Colonic mucosa (tissue), 4 donors: ENCODE measurements at regions of chr12 and their contacts with region 1.

Region 1: DNA sequence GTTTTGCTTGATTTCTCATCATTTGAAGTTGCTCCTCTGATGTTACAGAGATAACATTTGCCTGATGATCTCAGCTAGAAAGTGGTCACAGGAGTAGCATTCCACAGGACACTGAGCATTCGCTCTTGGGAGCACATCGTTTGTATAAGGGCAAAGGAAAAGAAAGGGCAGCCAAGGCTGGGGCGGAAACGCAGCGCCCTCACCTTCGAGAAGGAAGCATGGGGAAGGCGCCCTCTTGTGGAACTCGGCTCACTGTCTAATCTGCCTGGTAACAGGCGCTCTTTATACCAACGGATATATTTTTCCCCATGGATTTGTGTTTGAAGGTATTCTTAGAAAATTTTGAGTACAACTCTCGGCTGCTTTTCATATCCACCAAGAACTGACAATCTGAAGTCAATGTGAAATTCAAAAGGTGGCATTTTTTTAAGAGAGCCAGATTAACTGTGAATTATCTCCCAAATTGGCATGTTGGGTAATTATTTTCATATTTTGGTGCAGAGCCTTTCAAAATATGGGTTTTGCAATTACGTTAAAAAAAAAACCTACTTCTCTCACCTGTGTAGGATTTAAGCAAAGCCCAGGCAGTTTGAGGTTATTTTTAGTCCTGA is 172.7 kb downstream of the CAND1 start:
- DNase-seq: peak; percentile 95
- H3K4me3 ChIP-seq: no peak overlapping the region
- H3K27ac ChIP-seq: no peak overlapping the region
- H3K4me1 ChIP-seq: no peaks in the 10 kb centered on the region
- H3K27me3 ChIP-seq: no peaks in the 10 kb centered on the region
- CTCF ChIP-seq: peak; percentile 70

Region 2: DNA sequence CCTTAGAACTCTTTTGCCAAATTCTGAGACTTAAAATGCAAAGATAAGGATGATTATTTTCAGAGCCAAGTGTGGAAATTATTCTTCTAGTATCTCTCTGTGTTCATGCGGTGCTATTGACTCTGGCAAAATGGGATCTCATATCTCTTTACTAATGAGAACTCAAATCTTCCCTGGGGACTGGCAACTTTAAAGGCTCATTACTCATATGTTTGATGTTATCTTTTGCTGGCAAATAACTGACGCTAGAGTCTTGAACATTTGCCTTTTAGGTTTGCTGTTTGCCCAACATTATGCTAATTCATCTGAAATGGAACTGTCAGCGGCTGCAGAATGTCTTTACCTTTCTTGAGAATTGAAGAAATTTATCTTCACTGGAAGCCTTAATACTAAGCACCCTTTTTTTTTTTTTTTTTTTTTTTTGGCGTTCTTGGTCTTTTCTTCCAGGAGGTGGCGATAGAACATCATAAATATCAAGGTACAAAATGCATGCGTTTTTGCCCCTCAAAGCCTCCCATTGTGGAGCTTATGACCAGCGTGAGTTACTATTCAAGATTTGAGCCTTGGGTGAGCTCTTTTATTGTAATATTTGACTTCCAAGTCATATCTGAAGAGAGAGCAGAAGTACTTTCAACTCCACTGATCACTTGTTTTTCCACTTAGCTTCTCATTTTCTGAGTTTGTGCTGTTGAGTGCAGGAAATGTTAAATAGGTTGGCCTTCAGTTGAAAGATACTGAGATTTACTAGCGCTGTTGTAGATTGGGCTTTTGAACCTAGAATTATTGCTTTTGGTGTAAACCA is 86.1 kb before region 1 on chr12:
- intact Hi-C with region 1: loop called (anchors 5 kb)
- DNase-seq: no peak
- H3K4me3 ChIP-seq: no peak overlapping the region
- H3K27ac ChIP-seq: no peak overlapping the region
- H3K4me1 ChIP-seq: no peaks in the 10 kb centered on the region
- H3K27me3 ChIP-seq: no peaks in the 10 kb centered on the region
- CTCF ChIP-seq: peak; percentile 57